Caco-2 (cell line): ENCODE measurements at regions of chr20 and their contacts with region 1.

Region 1: DNA sequence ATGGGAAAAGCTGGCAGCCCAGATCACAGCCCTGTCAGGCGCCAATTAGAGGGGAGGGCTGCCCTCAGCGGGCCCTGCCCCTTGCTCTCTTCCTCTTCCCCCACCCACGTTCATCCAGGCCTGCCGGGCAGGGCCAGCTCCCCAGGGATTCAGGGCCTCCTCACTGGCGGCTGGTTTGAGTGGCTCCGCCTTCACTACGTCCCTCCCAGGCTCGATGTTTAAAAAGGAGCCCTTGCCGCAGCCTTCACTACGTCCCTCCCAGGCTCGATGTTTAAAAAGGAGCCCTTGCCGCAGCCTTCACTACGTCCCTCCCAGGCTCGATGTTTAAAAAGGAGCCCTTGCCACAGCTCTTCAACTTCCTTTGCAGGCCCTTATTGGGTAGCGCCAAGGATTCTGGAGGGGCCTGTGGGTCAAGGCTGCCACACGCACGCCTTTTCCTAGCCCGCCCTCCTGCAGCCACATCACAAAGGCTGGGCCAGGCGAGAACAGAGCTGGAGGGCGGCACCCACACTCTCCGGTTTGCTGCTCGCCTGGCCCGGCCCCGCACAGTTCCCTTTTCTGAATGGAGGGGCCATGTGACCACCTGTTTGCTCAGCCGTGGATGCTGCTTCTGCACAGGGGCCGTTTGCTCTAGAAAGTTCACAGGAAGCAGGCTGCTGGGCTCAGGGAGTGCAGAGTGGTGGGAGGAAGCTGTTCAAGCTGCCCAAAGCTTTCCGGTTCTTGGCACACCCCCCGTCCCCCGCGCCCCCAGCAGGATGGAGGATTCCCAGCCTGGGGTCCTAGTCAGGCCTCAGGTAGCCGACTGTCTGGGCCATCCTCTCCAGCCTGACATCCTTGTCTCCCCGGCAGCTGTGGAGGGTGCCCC is 1.6 kb downstream of the SLC17A9 start:
- DNase-seq: no peak
- H3K4me3 ChIP-seq: peak overlapping the region; percentile 60
- H3K4me3 Mint-ChIP-seq: peak overlapping the region; percentile 85
- H3K27ac Mint-ChIP-seq: peak overlapping the region; percentile 93
- H3K4me1 ChIP-seq: peaks cover 45% of the 10 kb centered on the region
- H3K4me1 Mint-ChIP-seq: peaks cover 35% of the 10 kb centered on the region
- H3K27me3 ChIP-seq: no peaks in the 10 kb centered on the region
- H3K27me3 Mint-ChIP-seq: no peaks in the 10 kb centered on the region
- CTCF ChIP-seq: no peak

Region 2: DNA sequence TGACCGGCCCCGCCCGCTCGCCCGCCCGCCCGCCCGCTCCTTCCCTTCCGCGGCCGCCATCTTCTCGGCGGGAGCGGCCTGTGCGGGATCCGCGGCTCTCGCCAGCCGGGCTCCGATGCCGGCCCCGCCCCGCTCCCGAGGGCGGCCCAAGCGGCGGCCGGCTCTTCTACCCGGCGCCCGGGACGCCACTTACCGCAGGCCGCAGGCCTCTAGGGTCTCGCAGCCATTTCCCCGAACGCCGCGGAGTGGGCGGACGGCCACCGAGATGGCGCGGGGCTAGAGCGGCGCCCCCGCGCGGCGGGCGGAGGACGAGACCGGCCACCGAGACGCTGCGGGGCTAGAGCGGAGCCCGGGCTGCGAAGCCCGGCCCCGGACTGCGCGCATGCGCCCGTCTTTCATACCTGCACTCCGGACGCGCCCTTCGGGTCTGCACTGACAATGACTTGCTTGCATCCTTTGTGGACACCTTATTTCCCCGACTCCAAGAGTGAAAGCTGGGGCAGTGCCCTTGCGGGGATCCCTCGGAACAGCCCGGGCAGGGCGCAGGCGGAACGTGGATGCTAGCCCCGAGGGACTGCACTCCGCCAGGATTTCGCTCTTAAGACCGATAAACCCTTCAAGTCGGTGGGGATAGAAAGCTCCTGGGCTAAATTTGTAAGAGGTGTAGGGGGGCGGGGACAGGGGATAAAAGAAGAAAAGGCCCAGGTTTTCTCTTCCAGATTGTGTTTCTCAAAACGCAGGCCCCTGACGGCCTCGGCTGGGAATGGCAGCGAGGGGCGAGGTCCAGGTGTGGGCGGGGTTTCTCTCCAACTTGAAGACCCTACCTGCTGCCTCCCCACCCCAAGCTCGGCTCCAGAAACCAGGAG is 27.6 kb before region 1 on chr20 and contains the start of gene DIDO1:
- CTCF ChIA-PET with region 1: interaction called, 3 read pairs
- POLR2A ChIA-PET with region 1: interaction called, 3 read pairs
- intact Hi-C with region 1: loop called (anchors 1 kb)
- DNase-seq: peak; percentile 96 to 99
- H3K4me3 ChIP-seq: peak within 1 kb of the TSS; percentile 99
- H3K4me3 Mint-ChIP-seq: peak within 1 kb of the TSS; percentile 93
- H3K27ac Mint-ChIP-seq: peak within 1 kb of the TSS; percentile 95
- H3K4me1 ChIP-seq: peaks cover 31% of the 10 kb centered on the region
- H3K4me1 Mint-ChIP-seq: peaks cover 37% of the 10 kb centered on the region
- H3K27me3 ChIP-seq: no peaks in the 10 kb centered on the region
- H3K27me3 Mint-ChIP-seq: no peaks in the 10 kb centered on the region
- CTCF ChIP-seq: peak; percentile 69 to 93
- total RNA-seq, gene DIDO1: 120 and 122 TPM in 2 replicates

Region 3: DNA sequence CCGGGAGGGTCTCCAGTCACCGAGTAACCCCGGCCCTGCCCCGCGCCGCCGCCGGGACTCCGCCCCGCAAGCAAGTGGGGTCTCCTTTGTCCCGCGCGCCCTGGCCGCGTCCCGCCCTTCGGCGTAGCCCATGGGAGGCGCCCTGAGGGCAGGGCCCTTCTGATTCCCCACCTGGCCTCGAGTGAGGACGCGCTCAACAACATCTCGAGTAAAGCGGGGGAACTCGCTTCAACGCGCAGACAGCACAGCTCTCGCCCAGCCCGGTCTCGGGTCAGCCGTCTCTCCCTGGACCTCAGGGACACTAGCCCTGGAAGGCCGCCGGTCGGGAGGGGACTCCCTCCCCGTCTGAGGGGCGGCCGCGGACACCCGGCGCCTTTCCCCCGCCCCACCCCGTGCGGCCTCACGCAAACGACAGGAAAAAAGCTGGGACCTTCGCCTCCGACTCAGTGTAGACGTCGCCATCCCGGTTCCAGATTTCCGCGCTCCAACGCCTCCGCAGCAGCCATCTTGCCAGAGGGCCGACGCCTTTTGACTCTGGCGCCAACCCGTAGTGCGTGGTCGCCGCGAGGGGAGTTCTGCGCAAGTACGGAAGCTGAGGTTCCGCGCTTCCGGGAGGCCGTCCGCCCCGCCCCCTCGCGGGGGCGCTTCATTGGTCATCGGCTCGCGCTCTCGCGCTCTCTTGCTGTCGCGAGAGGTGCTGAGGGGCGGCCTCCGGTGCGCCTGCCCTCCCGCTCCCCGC is 16.5 kb before region 1 on chr20:
- CTCF ChIA-PET with region 1: interaction called, 3 read pairs
- POLR2A ChIA-PET with region 1: interaction called, 26 read pairs
- intact Hi-C with region 1: loop called (anchors 1 kb)
- DNase-seq: peak; percentile 99 to 100
- H3K4me3 ChIP-seq: peak overlapping the region; percentile 81
- H3K4me3 Mint-ChIP-seq: no peak overlapping the region
- H3K27ac Mint-ChIP-seq: peak overlapping the region; percentile 95
- H3K4me1 ChIP-seq: peaks cover 26% of the 10 kb centered on the region
- H3K4me1 Mint-ChIP-seq: peaks cover 8% of the 10 kb centered on the region
- H3K27me3 ChIP-seq: no peaks in the 10 kb centered on the region
- H3K27me3 Mint-ChIP-seq: no peaks in the 10 kb centered on the region
- CTCF ChIP-seq: no peak

Region 4: DNA sequence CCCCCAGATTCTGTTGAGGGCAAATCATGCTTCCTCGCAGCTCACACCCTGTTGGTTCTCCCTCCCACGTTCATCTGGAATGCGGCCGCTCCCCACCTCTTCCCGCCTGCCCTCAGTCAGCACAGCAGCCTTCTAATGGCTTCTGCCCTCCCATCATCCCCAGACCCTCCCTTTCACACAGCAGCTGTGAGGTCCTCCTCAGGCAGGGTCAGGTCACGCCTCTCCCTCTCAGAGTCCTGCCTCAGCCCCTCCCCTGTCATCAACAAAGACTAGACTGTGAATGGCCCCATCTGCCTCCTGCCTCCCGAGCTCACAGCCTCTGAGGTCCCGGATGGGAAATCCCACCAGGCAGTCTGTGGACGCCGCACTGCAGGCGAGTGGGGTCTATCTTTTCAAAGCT is 60.6 kb after region 1 on chr20:
- CTCF ChIA-PET with region 1: interaction called, 4 read pairs
- POLR2A ChIA-PET with region 1: no interaction called
- intact Hi-C with region 1: loop called (anchors 2 kb)
- DNase-seq: peak; percentile 96 to 97
- H3K4me3 ChIP-seq: peak overlapping the region; percentile 36
- H3K4me3 Mint-ChIP-seq: peak overlapping the region; percentile 81
- H3K27ac Mint-ChIP-seq: peak overlapping the region; percentile 81
- H3K4me1 ChIP-seq: peaks cover 55% of the 10 kb centered on the region
- H3K4me1 Mint-ChIP-seq: peaks cover 46% of the 10 kb centered on the region
- H3K27me3 ChIP-seq: no peaks in the 10 kb centered on the region
- H3K27me3 Mint-ChIP-seq: no peaks in the 10 kb centered on the region
- CTCF ChIP-seq: no peak